Activated CD4-positive, alpha-beta memory T cell treated with anti-CD3 and anti-CD28 coated beads for 36 hours (primary cell): ENCODE measurements at regions of chr1 and their contacts with region 1.

Region 1: GRCh38 chr1:207885129-207886032 is 25.5 kb downstream of the CD34 start:
- DNase-seq: peak; percentile 83
- H3K4me3 Mint-ChIP-seq: no peak overlapping the region
- H3K27ac Mint-ChIP-seq: peak overlapping the region; percentile 90
- H3K4me1 Mint-ChIP-seq: peaks cover 30% of the 10 kb centered on the region
- H3K27me3 Mint-ChIP-seq: peaks cover 3% of the 10 kb centered on the region

Region 2: DNA sequence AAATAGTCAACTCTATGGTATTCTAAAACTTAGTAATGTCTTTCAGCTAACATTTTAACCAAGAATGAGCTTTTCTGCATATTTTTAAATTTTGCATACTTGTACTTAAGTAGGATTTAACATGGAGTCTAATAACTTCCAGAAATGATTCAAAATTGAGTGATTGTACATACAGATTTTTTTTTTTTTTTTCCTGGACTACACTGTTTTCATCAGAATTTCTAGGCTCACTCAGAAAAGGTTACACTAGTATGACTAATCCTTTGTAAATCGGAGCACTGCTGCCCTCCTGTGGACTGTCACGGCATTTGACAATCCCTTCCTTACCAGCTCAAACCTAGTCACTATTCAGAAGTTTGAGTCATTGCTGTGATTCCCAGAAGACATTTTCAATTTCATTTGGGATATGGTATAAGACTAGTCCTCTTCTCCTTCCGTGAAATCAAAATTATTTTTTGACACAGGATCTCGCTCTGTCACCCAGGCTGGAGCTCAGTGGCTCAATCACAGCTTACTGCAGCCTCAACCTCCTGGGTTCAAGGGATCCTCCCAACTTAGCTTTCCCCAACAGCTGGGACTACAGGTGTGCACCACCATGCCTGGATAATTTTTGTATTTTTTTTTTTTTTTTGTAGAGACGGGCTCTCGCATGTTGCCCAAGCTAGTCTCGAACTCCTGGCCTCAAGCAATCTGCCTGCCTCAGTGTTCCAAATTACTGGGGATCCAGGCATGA is 88.0 kb before region 1 on chr1:
- CTCF ChIA-PET with region 1: interaction called, 33 read pairs
- POLR2A ChIA-PET with region 1: no interaction called
- intact Hi-C with region 1: no loop called
- DNase-seq: peak; percentile 90
- H3K4me3 Mint-ChIP-seq: no peak overlapping the region
- H3K27ac Mint-ChIP-seq: peak overlapping the region; percentile 64
- H3K4me1 Mint-ChIP-seq: peaks cover 36% of the 10 kb centered on the region
- H3K27me3 Mint-ChIP-seq: no peaks in the 10 kb centered on the region

Region 3: DNA sequence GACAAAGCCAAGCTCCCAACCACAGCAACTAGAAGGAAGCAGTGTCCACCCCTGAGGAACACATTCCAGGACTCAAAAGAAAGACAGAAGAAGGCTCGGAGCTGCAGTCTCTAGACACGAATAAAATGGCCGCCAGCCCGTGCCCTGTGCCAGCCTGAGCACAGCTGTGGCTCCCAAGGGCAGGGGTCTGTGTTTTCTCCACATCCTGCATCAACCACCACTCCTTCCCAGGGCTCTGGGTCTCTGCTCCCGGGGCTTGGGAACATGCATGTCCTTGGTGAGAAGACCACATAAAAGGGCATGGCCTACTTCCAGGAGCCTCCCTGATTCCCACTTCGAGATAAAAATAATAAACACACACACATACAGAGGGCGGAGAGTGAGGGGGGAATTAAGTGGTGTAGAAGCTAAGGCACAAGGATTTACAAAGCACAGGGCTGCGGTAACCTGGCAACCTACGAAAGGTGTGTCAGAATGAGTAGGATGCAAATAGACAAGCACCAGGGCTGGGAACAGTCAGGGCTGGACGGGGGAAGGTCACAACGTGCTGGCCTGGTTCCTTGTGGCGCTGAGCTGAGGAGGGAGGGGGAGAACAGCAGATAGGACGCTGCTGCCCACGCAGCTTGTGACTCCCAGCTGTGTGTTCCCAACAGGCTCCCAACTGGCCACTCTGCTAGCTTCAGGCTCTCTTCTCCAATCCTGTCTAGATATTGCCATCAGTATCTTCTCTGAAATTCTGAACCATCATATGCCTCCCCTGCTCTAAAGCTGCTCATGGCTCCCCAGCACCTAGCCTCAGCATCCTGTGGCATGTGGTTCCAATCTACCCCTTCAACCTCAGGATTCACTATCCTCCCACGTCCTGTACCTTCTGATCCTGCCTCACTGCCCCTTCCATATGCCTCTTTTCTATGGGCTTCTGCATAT is 47.0 kb before region 1 on chr1:
- CTCF ChIA-PET with region 1: interaction called, 136 read pairs
- POLR2A ChIA-PET with region 1: no interaction called
- intact Hi-C with region 1: no loop called
- DNase-seq: no peak
- H3K4me3 Mint-ChIP-seq: no peak overlapping the region
- H3K27ac Mint-ChIP-seq: peak overlapping the region; percentile 56
- H3K4me1 Mint-ChIP-seq: peaks cover 69% of the 10 kb centered on the region
- H3K27me3 Mint-ChIP-seq: no peaks in the 10 kb centered on the region

Region 4: GRCh38 chr1:207897188-207897587 is 11.8 kb after region 1 on chr1:
- CTCF ChIA-PET with region 1: interaction called, 12 read pairs
- POLR2A ChIA-PET with region 1: no interaction called
- intact Hi-C with region 1: no loop called
- DNase-seq: no peak
- H3K4me3 Mint-ChIP-seq: no peak overlapping the region
- H3K27ac Mint-ChIP-seq: no peak overlapping the region
- H3K4me1 Mint-ChIP-seq: no peaks in the 10 kb centered on the region
- H3K27me3 Mint-ChIP-seq: no peaks in the 10 kb centered on the region

Region 5: DNA sequence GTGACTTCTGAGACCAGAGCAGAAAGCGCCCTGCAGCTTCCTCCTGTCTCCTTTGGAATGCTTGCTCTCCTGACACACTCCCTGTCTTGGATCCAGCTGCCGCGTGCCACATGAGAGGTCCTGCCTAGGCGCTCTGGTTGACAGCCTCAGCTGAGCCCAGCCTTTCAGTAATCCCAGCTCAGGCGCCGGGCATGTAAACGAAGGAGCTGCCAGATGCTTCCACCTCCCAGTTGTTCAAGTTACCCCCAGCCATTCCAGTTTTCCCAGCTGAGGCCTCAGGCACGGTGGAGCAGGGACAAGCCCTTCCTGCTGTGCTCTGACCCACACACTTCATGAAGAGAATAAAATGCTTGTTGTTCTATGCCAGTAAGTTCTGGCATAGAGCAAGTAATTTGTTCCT is 39.8 kb after region 1 on chr1:
- CTCF ChIA-PET with region 1: interaction called, 12 read pairs
- POLR2A ChIA-PET with region 1: no interaction called
- intact Hi-C with region 1: no loop called
- DNase-seq: no peak
- H3K4me3 Mint-ChIP-seq: no peak overlapping the region
- H3K27ac Mint-ChIP-seq: no peak overlapping the region
- H3K4me1 Mint-ChIP-seq: no peaks in the 10 kb centered on the region
- H3K27me3 Mint-ChIP-seq: peaks cover 24% of the 10 kb centered on the region

Region 6: DNA sequence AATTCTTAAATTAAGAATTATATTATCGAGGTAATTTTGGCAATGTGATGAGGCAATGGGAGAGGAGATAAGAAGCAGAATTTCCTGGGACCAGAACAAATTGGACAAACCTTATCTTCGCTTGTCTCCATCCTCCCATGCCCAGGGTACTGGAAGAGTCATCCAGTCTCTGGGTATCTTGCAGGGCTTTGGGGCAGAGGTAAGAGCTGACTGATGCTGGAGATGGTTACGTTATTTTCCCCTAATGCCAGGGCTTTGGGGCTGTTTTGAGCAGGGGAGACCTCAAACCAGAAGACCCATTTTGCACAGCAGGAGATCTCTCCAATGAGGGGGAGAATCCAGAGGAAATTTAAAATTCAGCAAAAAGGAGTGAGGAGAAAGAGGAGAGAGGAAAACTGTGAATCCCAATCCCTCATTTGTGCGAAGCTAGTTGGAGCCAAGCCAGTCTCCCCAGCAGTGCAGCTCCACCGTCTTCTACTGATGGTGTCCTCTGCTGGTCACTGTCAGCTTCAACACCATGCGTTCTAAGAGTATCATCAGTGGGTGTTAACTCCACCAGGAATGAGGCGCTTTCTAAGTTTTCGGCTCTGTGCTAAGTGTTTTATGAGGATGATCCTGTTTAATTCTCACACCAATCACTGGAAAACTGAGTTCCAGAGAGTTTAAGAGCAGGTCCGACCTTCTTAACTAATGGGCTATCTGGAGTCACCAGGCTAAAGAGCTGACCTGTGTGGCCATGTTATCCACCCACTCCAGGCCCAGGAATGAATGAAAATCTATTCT is 112.3 kb after region 1 on chr1:
- CTCF ChIA-PET with region 1: interaction called, 42 read pairs
- POLR2A ChIA-PET with region 1: no interaction called
- intact Hi-C with region 1: no loop called
- DNase-seq: peak; percentile 62
- H3K4me3 Mint-ChIP-seq: no peak overlapping the region
- H3K27ac Mint-ChIP-seq: no peak overlapping the region
- H3K4me1 Mint-ChIP-seq: no peaks in the 10 kb centered on the region
- H3K27me3 Mint-ChIP-seq: peaks cover 8% of the 10 kb centered on the region